Activated naive CD4-positive, alpha-beta T cell treated with anti-CD3 and anti-CD28 coated beads, Interleukin-2, amount 10 ng/mL, durations not matched to agents 7 days and 5 days (primary cell): ENCODE measurements at regions of chrX and their contacts with region 1.

Region 1: DNA sequence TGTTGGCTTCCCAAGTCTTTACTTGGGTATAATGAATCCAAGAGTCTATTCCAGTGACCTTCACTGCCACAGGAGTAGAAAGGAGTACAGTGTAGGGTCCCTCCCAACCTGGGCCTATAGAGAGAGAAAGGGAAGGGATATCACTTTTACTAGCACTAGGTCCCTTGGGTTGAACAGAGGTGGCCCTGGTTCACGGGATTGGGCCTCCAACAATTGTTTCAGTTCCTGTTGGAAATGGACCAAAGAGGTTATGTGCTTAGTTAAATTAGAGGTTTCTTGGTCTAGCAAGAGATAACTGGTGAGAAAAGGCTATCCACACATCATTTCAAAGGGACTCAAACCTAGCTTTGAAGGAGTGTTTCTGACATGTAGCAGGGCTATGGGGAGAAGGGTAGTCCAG is 57.1 kb upstream of the MED14 start:
- DNase-seq: no peak
- H3K4me3 Mint-ChIP-seq: no peak overlapping the region
- H3K27ac Mint-ChIP-seq: no peak overlapping the region
- H3K4me1 Mint-ChIP-seq: peaks cover 5% of the 10 kb centered on the region
- H3K27me3 Mint-ChIP-seq: peaks cover 4% of the 10 kb centered on the region

Region 2: DNA sequence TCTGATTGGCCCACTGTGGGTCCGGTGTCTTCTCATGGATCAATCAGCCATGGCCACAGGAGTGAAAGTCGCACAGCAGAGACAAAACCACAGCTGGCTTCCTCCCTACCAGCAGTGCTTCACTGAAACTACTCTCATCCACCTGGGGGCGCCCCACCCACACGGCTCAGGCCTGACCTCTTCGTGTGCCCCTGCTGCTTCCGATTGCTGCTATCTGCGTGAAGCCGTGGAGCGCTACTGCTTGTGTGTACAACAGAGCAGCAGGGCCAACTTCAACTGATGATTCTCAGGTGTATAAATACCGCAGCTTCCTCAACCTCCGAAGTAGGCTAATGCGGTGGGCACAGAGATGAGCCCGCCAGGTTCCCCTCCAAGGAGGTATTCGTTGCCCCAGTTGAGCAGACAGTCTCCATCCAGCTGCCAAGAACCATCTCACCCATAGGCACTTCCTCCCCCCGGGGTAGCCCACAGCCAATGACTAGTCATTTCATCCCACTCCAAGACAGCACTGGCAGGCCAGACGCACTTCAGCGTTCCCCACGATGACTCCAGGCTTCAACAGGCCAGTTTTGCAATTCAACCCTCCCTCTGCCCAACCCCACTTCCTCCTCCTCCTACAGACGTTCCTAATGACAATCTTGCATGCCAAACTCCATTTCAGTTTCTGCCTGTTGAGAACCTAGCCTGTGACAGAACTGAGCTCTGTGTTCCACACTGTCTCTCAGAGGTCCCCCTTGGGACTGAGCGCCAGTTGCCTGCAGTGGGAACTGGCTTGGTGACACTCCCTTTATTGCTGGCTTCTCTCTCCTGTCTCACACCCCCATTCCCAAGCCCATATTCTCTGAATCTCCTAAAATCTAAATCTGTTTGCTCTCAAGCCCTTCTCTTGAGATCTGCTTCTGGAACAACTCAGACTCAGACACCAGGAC is 253.0 kb before region 1 on chrX:
- CTCF ChIA-PET with region 1: interaction called, 17 read pairs
- DNase-seq: peak; percentile 83
- H3K4me3 Mint-ChIP-seq: no peak overlapping the region
- H3K27ac Mint-ChIP-seq: no peak overlapping the region
- H3K4me1 Mint-ChIP-seq: peaks cover 26% of the 10 kb centered on the region
- H3K27me3 Mint-ChIP-seq: peaks cover 20% of the 10 kb centered on the region

Region 3: GRCh38 chrX:40647307-40648197 is 144.9 kb before region 1 on chrX and contains the start of gene CXorf38:
- CTCF ChIA-PET with region 1: interaction called, 45 read pairs
- DNase-seq: peak; percentile 94
- H3K4me3 Mint-ChIP-seq: peak within 1 kb of the TSS; percentile 98
- H3K27ac Mint-ChIP-seq: peak within 1 kb of the TSS; percentile 94
- H3K4me1 Mint-ChIP-seq: peaks cover 25% of the 10 kb centered on the region
- H3K27me3 Mint-ChIP-seq: no peaks in the 10 kb centered on the region

Region 4: DNA sequence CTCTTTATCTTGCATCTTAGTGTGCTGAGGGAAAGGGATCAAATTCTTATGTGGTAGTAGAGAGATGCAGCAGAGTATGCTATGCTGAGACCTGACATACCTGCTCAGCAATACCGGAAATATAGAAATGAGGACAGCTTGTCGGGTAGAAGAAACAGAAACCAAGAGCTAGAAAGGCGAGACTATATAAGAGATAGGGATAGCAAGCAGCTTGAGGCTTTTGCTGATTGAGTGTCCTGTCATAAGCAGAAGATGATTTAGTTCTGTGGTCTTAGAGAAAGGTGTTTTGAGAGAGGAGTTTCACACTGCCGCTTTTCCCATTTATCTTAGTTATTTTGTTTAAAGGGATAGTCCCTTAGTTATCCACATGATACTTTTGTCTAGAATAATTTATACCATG is 324.5 kb after region 1 on chrX:
- CTCF ChIA-PET with region 1: interaction called, 17 read pairs
- DNase-seq: no peak
- H3K4me3 Mint-ChIP-seq: peak overlapping the region; percentile 47
- H3K27ac Mint-ChIP-seq: peak overlapping the region; percentile 89
- H3K4me1 Mint-ChIP-seq: peaks cover 66% of the 10 kb centered on the region
- H3K27me3 Mint-ChIP-seq: no peaks in the 10 kb centered on the region